ENCODE measurements at regions of chr18 and their contacts with region 1.

Region 1: DNA sequence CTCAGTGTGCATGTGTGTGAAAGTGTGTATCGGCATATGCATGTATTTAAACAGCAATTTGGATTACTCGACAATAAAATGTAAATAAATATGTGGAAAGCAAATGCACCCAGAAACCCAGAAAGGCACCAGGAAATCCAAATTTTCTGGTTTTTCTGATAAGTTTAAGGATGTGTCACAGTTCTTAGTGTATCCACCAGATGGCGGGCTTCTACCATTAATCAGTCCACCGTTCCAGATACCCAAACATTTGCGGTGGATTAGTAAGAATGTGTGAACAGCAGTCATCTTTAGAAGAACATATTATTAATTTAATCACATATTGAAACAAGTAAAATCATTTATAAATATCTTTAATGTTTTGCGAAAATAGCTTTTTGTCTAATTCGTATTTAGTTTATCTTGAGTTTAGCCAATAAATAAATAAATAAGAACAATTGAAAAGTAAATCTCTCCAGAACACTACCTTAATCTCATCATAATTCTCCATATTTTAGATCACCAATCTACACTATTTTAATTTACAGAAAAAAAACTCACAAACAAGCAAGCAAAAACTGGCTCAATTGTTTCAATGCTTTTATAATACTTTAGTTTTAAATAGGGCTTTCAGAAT is 298.9 kb downstream of the DSEL start:
- H3K4me3 Mint-ChIP-seq: no peak overlapping the region
- H3K27ac Mint-ChIP-seq: no peak overlapping the region
- H3K4me1 Mint-ChIP-seq: no peaks in the 10 kb centered on the region
- H3K27me3 Mint-ChIP-seq: peaks cover 3% of the 10 kb centered on the region

Region 2: DNA sequence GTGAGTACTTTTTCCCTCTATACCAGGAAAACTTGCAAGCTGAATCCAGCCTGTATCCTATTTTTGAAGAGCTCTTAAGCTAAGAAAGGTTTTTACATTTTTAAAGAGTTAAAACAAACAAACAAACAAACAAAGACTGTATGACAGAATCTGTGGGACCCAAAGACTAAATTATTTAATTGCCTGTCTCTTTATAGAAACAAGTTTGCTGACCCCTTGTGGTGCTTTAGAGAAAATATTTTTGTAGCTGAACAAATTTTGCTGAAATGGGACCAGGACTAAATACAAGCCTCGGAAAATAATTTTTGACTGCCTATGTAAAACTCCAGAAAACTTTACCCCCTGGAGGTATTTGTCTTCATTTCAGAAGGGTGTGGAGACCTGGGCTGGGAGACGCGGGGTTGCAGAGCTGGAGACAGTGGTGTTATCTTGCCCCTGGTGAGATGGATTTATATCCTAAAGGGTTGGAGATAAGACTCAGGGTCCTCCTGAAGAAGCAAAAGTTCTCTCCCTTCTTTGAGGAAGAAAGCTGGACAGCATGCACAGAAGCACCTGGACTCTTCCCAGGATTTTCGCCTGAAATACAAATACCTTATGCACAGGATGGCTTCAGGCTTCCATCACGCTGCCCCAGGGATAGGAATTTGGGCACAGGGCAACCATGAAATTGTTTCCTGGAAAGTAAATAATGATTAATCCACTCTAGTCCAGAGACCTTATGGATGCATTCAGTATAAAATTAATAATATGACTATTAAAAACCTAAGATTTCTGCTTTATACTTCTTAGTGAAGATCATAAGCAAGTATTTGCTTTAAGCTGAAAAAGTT is 1442.9 kb after region 1 on chr18:
- intact Hi-C with region 1: loop called (anchors 1 kb)
- H3K4me3 Mint-ChIP-seq: no peak overlapping the region
- H3K27ac Mint-ChIP-seq: no peak overlapping the region
- H3K4me1 Mint-ChIP-seq: peaks cover 10% of the 10 kb centered on the region
- H3K27me3 Mint-ChIP-seq: peaks cover 1% of the 10 kb centered on the region

Region 3: DNA sequence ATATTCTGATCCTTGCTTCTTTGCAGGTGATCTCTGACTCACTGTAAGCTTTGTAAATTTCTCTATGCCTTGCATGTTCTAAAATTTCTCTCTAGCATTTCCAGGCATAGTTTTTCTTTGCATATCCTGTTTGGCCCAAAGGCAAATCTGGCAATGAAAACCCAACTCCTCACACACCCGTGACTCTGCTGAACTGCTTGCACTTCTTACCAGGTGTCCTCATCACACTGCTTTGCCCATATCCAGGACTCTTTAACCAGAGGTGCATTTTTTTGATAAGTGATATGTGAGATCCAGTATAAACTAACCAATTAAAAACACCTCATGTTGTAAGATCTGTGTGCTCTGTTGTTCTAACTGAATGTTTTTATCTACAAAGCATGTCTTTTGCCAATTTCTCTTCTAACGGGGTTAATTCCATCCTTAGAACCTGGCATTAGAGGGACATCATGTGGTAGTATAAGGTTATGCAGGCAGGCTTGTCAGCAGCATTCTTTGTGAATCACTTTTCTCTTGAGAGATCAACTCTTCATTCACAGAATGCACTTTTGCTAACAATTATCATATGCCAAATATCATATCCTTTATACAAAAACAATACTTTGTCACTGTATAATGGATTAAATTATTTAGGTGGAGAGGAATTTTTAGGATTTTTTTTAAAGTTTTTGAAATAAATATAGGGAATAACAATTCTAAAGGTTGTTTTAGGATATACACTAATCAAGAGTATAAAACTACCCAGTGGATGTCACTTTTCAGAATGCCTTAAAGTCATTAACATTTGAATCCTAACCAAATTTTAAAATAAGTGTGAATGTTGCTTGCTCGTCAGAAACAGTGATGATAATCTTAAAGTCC is 1518.1 kb after region 1 on chr18:
- intact Hi-C with region 1: loop called (anchors 2 kb)
- H3K4me3 Mint-ChIP-seq: no peak overlapping the region
- H3K27ac Mint-ChIP-seq: no peak overlapping the region
- H3K4me1 Mint-ChIP-seq: peaks cover 9% of the 10 kb centered on the region
- H3K27me3 Mint-ChIP-seq: no peaks in the 10 kb centered on the region